ENCODE measurements at regions of chr1 and their contacts with region 1.

Region 1: GRCh38 chr1:197744979-197745378 is 30.3 kb downstream of the DENND1B start:
- H3K4me3 Mint-ChIP-seq: no peak overlapping the region
- H3K27ac Mint-ChIP-seq: no peak overlapping the region
- H3K4me1 Mint-ChIP-seq: peaks cover 21% of the 10 kb centered on the region
- H3K27me3 Mint-ChIP-seq: no peaks in the 10 kb centered on the region

Region 2: GRCh38 chr1:197692965-197693364 is 52.0 kb before region 1 on chr1:
- intact Hi-C with region 1: loop called (anchors 10 kb)
- H3K4me3 Mint-ChIP-seq: no peak overlapping the region
- H3K27ac Mint-ChIP-seq: no peak overlapping the region
- H3K4me1 Mint-ChIP-seq: peaks cover 28% of the 10 kb centered on the region
- H3K27me3 Mint-ChIP-seq: no peaks in the 10 kb centered on the region

Measured in dendritic cell treated with granulocyte-macrophage colony-stimulating factor and Interleukin-4, amounts not matched to agents 40 ng/mL and 50 ng/mL, for 4 days (primary cell).